Stomach (tissue), 19 donors: ENCODE measurements at regions of chr1 and their contacts with region 1.

Region 1: GRCh38 chr1:200620273-200621131 is at the start of gene KIF14:
- DNase-seq: peak; percentile 92 to 98
- H3K4me3 ChIP-seq: peak within 1 kb of the TSS; percentile 59 to 64 (median 61)
- H3K27ac ChIP-seq: peak within 1 kb of the TSS in 4 of 5 donors; percentile 62 to 75 (median 70)
- H3K4me1 ChIP-seq: peaks cover 12 to 28% (median 19%) of the 10 kb centered on the region in 4 donors
- H3K27me3 ChIP-seq: no peaks in the 10 kb centered on the region
- CTCF ChIP-seq: no peak
- EP300 ChIP-seq: no peak
- POLR2A ChIP-seq: no peak
- total RNA-seq, gene KIF14: 0.43 to 2.2 (median 0.87) TPM

Region 2: DNA sequence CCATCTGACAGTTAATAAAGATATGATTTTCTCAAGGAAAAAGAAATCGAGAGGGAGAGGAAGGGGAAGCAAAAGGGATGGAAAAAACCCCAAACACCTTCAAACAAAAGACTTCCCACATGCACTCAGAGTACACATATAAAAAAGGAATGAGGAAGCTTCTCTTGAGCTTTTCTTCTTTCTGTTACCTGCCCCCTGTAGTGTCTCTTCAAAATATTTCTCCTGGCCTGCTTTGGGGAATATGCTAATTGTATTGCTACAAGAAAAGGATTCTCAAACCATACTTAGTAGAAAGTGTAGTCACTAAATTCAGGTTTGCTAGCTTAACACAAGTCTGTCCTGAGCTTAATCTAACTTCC is 58.7 kb before region 1 on chr1:
- intact Hi-C with region 1: no loop called
- DNase-seq: no peak
- H3K4me3 ChIP-seq: no peak overlapping the region
- H3K27ac ChIP-seq: no peak overlapping the region
- H3K4me1 ChIP-seq: no peaks in the 10 kb centered on the region
- H3K27me3 ChIP-seq: no peaks in the 10 kb centered on the region
- CTCF ChIP-seq: no peak
- EP300 ChIP-seq: no peak
- POLR2A ChIP-seq: no peak

Region 3: DNA sequence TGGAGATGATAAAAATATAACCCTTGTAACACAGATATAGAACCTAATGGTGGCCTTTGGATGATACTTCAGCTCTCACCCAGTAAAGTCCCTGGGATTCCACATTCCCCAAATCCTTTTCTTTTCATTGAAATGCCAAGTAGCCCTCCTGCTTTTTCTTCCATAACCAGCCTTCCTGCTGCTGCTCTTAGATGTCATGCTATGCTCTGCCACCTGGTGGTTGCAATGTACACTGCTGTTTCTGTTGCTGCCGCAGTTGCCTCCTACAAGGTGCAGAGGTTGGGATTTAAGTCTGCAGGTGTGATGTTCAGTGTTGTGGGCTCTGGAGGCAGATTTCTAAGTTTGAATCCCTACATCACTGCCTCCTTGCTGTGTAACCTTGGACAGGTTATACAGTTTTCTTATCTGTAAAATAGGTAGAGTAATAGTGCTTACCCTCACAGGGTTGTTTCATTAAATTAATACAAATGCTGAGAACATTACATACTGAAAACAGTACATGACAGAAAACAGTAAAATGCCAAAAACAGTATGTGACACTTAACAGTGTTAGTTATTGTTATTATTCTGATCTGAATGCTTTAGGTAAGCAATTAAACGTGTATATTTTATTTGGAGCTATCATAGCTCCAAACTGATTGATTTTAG is 182.5 kb after region 1 on chr1:
- intact Hi-C with region 1: loop called (anchors 10 kb)
- DNase-seq: peak; percentile 82 to 94
- H3K4me3 ChIP-seq: no peak overlapping the region
- H3K27ac ChIP-seq: no peak overlapping the region
- H3K4me1 ChIP-seq: peaks cover 0 to 21% (median 3%) of the 10 kb centered on the region in 4 donors
- H3K27me3 ChIP-seq: no peaks in the 10 kb centered on the region
- CTCF ChIP-seq: peak in 5 of 7 experiments; percentile 74 to 94 (median 83)
- EP300 ChIP-seq: no peak
- POLR2A ChIP-seq: no peak

Region 4: GRCh38 chr1:201042779-201043461 is 422.4 kb after region 1 on chr1:
- intact Hi-C with region 1: loop called (anchors 5 kb)
- DNase-seq: peak; percentile 67 to 89
- H3K4me3 ChIP-seq: no peak overlapping the region
- H3K27ac ChIP-seq: no peak overlapping the region
- H3K4me1 ChIP-seq: peaks cover 0 to 7% (median 3%) of the 10 kb centered on the region in 4 donors
- H3K27me3 ChIP-seq: no peaks in the 10 kb centered on the region
- CTCF ChIP-seq: peak in 5 of 7 experiments; percentile 71 to 93 (median 79)
- EP300 ChIP-seq: no peak
- POLR2A ChIP-seq: no peak